ENCODE measurements at regions of chr9 and their contacts with region 1.

Region 1: DNA sequence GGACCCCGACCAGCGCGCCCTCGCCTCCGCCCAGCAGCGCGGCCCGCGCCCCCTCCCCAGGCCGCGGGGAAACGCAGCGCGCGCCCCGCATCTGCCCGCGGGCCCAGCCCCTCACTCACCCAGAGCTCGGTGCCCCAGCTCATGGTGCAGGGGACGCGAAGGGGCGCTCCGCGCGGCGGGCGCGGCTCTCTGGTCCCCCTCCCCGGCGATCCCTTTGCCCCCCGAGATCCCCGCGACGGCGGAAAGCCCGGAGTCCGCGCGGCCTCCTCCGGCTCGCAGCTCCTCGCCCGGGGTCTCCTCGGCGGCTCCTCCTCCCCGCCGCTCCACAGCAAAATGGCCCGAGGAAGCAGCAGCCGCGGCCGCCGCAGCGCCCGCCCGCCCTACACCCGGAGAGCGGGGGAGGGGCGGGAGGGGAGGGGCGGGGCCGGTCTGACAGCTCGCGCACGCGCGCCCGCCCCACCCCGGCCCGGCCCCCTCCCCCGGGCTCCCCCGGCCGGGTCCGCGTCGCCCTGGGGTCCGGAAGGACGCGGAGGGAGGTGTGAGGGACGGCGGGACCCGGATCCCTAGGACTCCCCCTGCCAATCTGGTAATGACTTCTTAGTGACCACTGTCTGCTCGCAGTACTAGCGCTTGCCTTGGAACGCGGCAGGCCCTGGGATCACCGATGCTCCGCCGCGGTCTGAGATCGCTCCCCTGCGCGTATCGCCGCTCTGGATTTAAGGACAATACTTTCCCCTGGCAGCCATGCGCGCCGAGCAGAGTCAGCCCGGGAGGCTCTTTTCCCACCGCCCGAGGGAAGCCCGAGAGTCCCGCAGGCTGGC is at the start of gene FNBP1:
- DNase-seq: peak; percentile 77
- ATAC-seq: peak; percentile 71
- H3K4me3 Mint-ChIP-seq: peak within 1 kb of the TSS; percentile 99
- H3K27ac Mint-ChIP-seq: peak within 1 kb of the TSS; percentile 99
- H3K4me1 Mint-ChIP-seq: peaks cover 54% of the 10 kb centered on the region
- H3K27me3 Mint-ChIP-seq: no peaks in the 10 kb centered on the region
- CTCF ChIP-seq: no peak
- total RNA-seq, gene FNBP1: 454 and 501 TPM in 2 replicates

Region 2: DNA sequence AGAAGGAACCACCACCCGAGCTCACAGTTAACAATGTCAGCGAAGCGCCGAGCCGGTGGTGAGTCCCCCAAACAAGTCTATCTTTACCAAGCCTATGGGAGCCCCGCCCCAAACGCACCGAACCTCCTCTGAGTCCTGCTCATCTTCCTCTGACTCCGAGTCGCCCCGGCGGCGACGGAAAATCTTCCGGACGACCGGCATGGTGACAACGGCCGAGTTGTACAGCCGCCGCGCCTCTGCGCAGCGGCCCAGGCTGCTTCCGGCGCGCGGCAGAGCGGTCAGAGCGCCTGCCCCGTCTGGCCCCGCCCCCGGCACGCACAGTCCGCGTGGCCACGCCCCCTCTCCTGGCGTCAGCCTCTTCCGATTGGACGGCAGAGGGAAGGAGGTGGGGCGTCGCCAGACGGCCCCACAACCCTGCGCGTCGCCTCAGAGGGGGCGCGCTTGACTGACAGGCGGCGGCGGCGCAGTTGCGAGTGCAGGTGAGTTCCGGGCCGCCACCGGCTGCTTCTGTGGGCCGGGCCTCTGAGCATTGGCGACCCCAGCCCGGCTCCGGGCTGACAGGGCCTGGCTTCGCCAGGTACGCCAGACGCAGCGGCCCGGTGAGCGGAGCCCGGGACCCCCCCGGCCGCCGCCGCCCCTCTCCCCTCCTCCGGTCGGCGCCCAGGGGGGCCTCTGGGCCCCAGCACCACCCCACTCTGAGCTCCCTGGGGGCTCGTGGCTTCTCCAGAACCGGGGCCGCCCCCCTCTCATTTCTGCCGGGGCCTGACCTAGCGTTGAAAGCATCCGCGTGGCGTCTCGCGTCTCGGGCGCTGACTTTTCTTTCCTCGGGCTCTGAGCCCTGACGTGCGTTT is 207.8 kb before region 1 on chr9 and contains the starts of genes C9orf78 and USP20:
- CTCF ChIA-PET with region 1: no interaction called
- POLR2A ChIA-PET with region 1: interaction called, 3 read pairs
- intact Hi-C with region 1: loop called (anchors 5 kb)
- DNase-seq: peak; percentile 97
- ATAC-seq: peak; percentile 96
- H3K4me3 Mint-ChIP-seq: peak within 1 kb of the TSS; percentile 99
- H3K27ac Mint-ChIP-seq: peak within 1 kb of the TSS; percentile 98
- H3K4me1 Mint-ChIP-seq: peaks cover 46% of the 10 kb centered on the region
- H3K27me3 Mint-ChIP-seq: no peaks in the 10 kb centered on the region
- CTCF ChIP-seq: no peak
- total RNA-seq, gene C9orf78: 34.1 and 42.7 TPM in 2 replicates
- total RNA-seq, gene USP20: 28.1 and 31.6 TPM in 2 replicates

Region 3: DNA sequence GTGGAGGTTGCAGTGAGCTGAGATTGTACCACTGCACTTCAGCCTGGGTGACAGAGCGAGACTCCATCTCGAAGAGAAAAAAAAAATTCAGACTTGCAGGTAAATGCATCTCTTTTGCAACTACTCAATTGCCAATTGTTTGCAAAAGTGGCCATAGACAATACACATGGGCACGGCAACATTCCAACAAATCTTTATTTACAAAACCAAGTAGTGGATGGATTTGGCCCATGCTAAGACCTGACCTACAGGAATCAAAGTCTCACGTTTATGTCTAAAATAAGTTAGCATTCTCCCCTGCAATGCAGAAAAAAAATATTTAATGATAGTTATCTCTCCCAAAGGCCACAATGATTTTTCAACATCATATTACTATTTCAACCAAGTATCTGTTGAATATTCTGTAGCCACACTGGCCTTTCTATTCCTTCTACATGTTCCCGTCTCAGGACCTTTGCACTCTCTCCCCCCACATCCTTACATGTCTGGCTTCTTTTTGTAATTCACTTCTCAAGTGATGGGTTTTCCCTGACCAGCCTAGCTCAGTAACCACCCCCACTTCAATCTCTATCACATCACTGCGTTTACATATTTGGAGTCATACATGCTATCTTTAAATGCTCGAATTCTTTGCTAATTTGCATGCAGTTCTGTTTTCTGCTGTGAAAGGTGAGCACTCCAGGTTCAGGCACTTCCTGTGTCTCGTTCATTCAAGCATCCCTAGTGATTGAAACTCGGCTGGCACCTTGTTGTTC is 54.3 kb before region 1 on chr9:
- CTCF ChIA-PET with region 1: no interaction called
- POLR2A ChIA-PET with region 1: interaction called, 620 read pairs
- intact Hi-C with region 1: loop called (anchors 1 kb)
- DNase-seq: no peak
- ATAC-seq: peak; percentile 70
- H3K4me3 Mint-ChIP-seq: peak overlapping the region; percentile 60
- H3K27ac Mint-ChIP-seq: peak overlapping the region; percentile 89
- H3K4me1 Mint-ChIP-seq: peaks cover 93% of the 10 kb centered on the region
- H3K27me3 Mint-ChIP-seq: no peaks in the 10 kb centered on the region
- CTCF ChIP-seq: no peak

Region 4: GRCh38 chr9:130010151-130010988 is 32.7 kb before region 1 on chr9:
- CTCF ChIA-PET with region 1: interaction called, 3 read pairs
- POLR2A ChIA-PET with region 1: interaction called, 1,209 read pairs
- intact Hi-C with region 1: loop called (anchors 1 kb)
- DNase-seq: no peak
- ATAC-seq: peak; percentile 71
- H3K4me3 Mint-ChIP-seq: peak overlapping the region; percentile 58
- H3K27ac Mint-ChIP-seq: peak overlapping the region; percentile 97
- H3K4me1 Mint-ChIP-seq: peaks cover 92% of the 10 kb centered on the region
- H3K27me3 Mint-ChIP-seq: no peaks in the 10 kb centered on the region
- CTCF ChIP-seq: no peak

Region 5: DNA sequence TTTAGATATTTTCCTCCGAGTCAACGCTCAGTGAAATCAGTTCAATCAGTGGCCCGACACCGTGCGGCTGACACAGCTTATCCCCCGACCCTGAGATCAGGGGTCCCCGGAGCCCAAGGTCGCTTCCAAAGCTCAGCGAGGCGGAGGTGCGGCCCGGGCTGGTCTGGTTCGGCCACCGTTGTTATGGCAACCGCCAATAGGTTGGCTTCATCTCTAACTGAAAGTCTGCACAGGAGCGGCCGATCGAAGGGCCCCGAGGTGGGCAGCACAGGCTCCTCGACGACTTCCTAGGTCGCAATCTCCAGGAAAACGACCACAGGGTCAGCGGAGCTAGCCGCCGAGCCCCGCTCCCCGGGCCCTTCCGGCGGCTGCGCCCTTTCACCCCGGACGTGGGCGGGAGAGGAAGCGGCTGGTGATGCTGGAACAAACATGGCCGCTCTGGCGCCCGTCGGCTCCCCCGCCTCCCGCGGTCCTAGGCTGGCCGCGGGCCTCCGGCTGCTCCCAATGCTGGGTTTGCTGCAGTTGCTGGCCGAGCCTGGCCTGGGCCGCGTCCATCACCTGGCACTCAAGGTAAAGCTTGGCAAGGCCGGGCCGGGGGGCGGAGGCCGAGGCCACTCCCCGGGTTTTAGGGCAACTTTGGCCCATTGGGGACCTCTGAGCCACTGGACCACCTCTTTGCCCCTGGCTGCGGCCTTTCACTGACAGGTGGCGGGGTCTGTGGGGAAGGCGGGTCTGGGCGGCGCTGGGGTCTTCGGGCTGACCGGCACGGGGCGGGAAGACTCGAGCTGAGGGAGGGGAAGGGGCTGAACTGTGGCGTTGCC is 10.7 kb after region 1 on chr9 and contains the start of gene GPR107:
- CTCF ChIA-PET with region 1: no interaction called
- POLR2A ChIA-PET with region 1: interaction called, 70 read pairs
- intact Hi-C with region 1: loop called (anchors 1 kb)
- DNase-seq: peak; percentile 73
- ATAC-seq: peak; percentile 96
- H3K4me3 Mint-ChIP-seq: peak within 1 kb of the TSS; percentile 91
- H3K27ac Mint-ChIP-seq: peak within 1 kb of the TSS; percentile 80
- H3K4me1 Mint-ChIP-seq: peaks cover 30% of the 10 kb centered on the region
- H3K27me3 Mint-ChIP-seq: no peaks in the 10 kb centered on the region
- CTCF ChIP-seq: no peak
- total RNA-seq, gene GPR107: 17.7 and 19.6 TPM in 2 replicates

Region 6: DNA sequence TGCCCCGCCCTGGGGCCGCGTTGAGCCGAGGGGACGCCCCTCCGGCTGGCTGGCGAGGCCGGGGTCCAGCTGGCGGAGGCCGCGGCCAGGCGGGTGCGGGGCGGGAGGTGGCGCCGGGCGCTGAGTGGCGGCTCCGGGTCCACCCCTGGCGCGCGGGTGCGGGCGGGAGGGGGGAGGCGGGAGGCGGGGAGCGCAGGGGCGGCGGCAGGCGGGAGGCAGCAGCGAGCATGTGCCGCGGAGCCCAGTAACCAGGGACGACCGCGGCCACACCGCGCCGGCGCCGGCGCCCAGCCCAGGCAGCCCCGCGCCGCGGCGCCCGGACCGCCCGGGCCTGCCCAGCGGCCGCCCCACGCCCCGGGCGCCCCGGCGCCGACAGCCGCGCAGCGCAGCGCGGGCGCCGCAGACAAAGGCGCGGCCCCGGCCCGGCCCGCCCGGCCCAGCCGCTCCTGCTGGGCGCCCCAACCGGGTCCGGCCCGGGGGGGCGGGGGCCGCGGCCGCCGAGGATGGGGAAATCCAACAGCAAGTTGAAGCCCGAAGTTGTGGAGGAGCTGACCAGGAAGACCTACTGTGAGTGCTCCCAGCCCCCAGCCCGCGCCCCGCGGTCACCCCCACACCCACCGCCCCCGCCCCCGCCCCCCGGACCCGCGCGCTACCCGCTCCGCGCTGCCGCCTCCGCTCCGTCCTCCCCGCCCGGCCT is 129.3 kb after region 1 on chr9 and contains the start of gene NCS1:
- CTCF ChIA-PET with region 1: no interaction called
- POLR2A ChIA-PET with region 1: no interaction called
- intact Hi-C with region 1: no loop called
- DNase-seq: no peak
- ATAC-seq: peak; percentile 68
- H3K4me3 Mint-ChIP-seq: peak within 1 kb of the TSS; percentile 66
- H3K27ac Mint-ChIP-seq: no peak within 1 kb of the TSS
- H3K4me1 Mint-ChIP-seq: peaks cover 4% of the 10 kb centered on the region
- H3K27me3 Mint-ChIP-seq: peaks cover 36% of the 10 kb centered on the region
- CTCF ChIP-seq: no peak
- total RNA-seq, gene NCS1: 0.24 and 0.59 TPM in 2 replicates

Measured in activated B cell treated with CpG ODN at 0.5 μM for 24 hours (primary cell).